ENCODE measurements at regions of chr7 and their contacts with region 1.

Region 1: DNA sequence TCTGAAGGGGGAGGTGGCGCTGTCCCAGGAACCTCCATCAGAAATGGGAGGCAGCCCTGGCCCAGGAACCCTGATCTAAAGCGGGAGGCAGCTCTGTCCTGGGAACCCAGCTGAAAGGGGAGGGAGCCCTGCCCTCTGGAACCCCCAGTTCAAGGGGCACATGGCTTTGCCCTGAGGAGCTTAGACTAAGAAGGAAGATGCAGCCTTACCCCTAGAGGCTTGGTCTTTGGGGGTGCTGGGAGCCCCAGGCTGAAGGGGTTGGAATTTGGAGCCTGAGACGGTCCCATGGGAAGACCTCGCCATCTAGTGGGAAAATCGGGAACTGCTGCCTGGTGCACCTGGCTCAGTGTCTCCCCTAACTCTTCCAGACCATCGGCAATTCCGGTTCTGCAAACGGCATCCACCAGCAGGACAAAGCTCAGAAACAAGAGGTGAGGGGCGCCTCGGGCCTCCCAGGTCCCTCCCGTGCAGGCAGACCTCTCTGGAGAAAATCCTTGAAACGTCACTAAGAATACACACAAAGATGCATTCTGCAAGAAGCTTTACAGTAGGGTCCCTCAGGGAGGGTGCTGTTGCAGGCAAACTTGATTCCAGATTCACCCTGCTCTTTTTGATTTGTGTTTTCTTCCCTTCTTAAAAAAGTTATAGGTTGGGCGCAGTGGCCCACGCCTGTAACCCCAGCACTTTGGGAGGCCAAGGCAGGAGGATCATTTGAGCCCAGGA is 52.4 kb upstream of the GTF2IRD1 start:
- DNase-seq: peak; percentile 77
- H3K4me3 ChIP-seq: no peak overlapping the region
- H3K27ac ChIP-seq: no peak overlapping the region
- H3K4me1 ChIP-seq: no peaks in the 10 kb centered on the region
- H3K27me3 ChIP-seq: no peaks in the 10 kb centered on the region
- CTCF ChIP-seq: peak; percentile 92 to 99 (median 97)
- EP300 ChIP-seq: no peak
- POLR2A ChIP-seq: no peak

Region 2: DNA sequence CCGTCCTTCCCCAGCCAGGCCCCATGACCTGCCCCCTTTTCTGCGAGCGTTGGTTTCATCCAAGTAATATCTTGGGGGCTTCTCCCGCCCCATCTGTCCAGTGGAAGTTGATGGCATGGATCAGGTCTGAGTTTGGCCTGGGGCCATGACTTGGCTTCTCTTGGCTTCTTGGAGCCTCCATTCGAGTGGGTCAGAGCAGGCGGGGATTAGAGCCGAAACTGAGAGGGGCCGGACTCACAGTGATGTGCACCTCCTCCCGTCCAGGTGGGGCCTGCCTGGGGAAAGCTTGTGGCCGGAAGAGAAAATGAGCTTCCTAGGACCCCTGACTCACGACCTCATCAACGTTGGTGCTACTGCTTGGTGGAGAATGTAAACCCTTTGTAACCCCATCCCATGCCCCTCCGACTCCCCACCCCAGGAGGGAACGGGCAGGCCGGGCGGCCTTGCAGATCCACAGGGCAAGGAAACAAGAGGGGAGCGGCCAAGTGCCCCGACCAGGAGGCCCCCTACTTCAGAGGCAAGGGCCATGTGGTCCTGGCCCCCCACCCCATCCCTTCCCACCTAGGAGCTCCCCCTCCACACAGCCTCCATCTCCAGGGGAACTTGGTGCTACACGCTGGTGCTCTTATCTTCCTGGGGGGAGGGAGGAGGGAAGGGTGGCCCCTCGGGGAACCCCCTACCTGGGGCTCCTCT is 332.8 kb before region 1 on chr7:
- in situ Hi-C with region 1: loop called (anchors 5 to 25 kb)
- intact Hi-C with region 1: loop called (anchors 5 kb)
- DNase-seq: no peak
- H3K4me3 ChIP-seq: no peak overlapping the region
- H3K27ac ChIP-seq: peak overlapping the region in 1 of 4 donors; percentile 21
- H3K4me1 ChIP-seq: no peaks in the 10 kb centered on the region
- H3K27me3 ChIP-seq: no peaks in the 10 kb centered on the region
- CTCF ChIP-seq: no peak
- EP300 ChIP-seq: no peak
- POLR2A ChIP-seq: no peak

Region 3: GRCh38 chr7:74212656-74213055 is 188.6 kb before region 1 on chr7:
- in situ Hi-C with region 1: loop called in 3 of 4 experiments (anchors 5 to 10 kb)
- intact Hi-C with region 1: loop called (anchors 2 kb)
- DNase-seq: no peak
- H3K4me3 ChIP-seq: no peak overlapping the region
- H3K27ac ChIP-seq: no peak overlapping the region
- H3K4me1 ChIP-seq: peaks cover 4 to 17% (median 8%) of the 10 kb centered on the region in 4 donors
- H3K27me3 ChIP-seq: no peaks in the 10 kb centered on the region
- CTCF ChIP-seq: no peak
- EP300 ChIP-seq: no peak
- POLR2A ChIP-seq: no peak

Region 4: DNA sequence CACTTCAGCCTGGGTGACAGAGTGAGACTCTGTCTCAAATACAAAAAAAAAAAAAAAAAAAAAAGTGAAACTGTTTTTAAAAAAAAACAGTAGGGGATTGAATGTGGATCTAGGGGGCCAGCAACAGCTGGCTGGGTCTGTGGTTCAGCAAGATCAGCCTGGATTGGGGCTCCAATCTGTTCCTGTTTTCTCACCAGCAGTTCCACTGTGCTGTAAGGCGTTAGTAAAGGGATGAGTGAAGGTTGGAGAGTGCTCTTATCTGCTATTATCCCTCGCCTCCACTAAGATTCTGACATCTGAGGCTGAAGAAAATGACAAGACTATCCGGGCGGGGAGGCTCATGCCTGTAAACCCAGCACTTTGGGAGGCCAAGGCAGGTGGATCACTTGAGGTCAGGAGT is 10.8 kb after region 1 on chr7:
- in situ Hi-C with region 1: no loop called
- intact Hi-C with region 1: no loop called
- DNase-seq: no peak
- H3K4me3 ChIP-seq: no peak overlapping the region
- H3K27ac ChIP-seq: no peak overlapping the region
- H3K4me1 ChIP-seq: no peaks in the 10 kb centered on the region
- H3K27me3 ChIP-seq: peaks cover 10% of the 10 kb centered on the region
- CTCF ChIP-seq: no peak
- EP300 ChIP-seq: no peak
- POLR2A ChIP-seq: no peak

Region 5: DNA sequence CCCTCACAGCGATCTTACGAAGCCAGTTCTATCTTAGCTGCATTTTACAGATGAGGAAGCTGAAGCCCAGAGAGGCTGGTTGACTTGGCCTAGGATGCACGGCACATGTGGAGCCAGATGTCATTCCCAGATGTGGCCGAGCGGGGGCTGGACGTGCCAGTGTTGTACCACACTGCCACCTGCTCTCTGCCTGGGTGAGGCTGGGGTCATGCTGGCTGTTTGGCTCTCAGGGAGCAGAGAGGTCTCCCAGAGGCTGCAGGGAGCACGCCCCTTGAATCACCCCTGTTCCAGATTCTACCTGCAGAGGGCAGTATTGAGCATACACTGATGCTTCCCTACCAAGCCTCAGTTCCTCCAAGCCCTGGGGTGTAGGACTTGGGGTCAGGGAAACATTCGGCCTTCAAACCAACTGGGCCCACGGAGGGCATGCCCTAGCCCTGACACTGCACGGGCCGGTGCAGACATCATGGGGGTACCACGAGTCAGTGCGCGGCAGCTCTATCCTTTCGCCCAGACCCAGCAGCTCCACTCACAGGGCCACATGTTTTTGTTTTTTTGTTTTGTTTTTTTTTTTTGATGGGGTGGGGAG is 48.6 kb after region 1 on chr7:
- in situ Hi-C with region 1: no loop called
- intact Hi-C with region 1: loop called (anchors 2 kb)
- DNase-seq: peak; percentile 66
- H3K4me3 ChIP-seq: no peak overlapping the region
- H3K27ac ChIP-seq: no peak overlapping the region
- H3K4me1 ChIP-seq: peaks cover 15 to 25% (median 23%) of the 10 kb centered on the region in 4 donors
- H3K27me3 ChIP-seq: no peaks in the 10 kb centered on the region
- CTCF ChIP-seq: peak; percentile 81 to 90 (median 87)
- EP300 ChIP-seq: no peak
- POLR2A ChIP-seq: no peak

Region 6: DNA sequence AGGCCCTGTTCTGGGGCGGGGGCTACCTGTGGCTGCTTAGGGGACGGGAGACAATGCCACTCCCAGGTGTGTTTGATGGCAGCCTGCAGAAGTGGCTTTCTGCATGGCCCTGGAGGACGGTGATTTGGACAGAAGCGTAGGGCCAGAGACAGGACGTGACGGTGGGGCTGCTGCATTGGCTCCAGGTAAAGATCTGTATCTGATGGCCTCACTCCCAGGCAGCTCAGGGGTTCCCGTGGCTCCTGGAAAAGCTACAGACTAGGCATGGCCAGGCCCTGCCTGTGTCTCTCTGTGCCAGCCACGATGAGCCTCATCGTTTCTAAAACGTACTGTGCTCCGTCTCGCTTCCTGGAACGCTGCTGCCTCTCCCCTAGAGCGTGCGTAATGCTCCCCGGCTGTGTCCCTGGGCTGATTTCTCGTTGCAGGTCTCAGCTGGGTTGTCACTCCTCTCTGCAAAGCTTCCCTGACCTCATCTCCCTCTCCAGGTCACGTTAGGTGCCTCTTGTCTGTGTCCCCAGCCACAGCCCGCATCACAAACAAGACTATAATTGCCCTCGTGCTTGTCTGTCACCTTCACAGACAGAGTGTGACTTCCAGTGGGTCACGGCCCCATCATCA is 65.0 kb after region 1 on chr7:
- in situ Hi-C with region 1: no loop called
- intact Hi-C with region 1: no loop called
- DNase-seq: peak; percentile 16
- H3K4me3 ChIP-seq: no peak overlapping the region
- H3K27ac ChIP-seq: peak overlapping the region; percentile 28 to 63 (median 54)
- H3K4me1 ChIP-seq: peaks cover 7 to 30% (median 21%) of the 10 kb centered on the region in 4 donors
- H3K27me3 ChIP-seq: no peaks in the 10 kb centered on the region
- CTCF ChIP-seq: no peak
- EP300 ChIP-seq: peak; percentile 87
- POLR2A ChIP-seq: no peak

Region 7: GRCh38 chr7:75018570-75019364 is 617.5 kb after region 1 on chr7:
- in situ Hi-C with region 1: no loop called
- intact Hi-C with region 1: no loop called
- DNase-seq: no peak
- H3K4me3 ChIP-seq: no peak overlapping the region
- H3K27ac ChIP-seq: no peak overlapping the region
- H3K4me1 ChIP-seq: no peaks in the 10 kb centered on the region
- H3K27me3 ChIP-seq: no peaks in the 10 kb centered on the region
- CTCF ChIP-seq: no peak
- EP300 ChIP-seq: no peak
- POLR2A ChIP-seq: no peak